Ovary (tissue), 10 donors: ENCODE measurements at regions of chr15 and their contacts with region 1.

Region 1: DNA sequence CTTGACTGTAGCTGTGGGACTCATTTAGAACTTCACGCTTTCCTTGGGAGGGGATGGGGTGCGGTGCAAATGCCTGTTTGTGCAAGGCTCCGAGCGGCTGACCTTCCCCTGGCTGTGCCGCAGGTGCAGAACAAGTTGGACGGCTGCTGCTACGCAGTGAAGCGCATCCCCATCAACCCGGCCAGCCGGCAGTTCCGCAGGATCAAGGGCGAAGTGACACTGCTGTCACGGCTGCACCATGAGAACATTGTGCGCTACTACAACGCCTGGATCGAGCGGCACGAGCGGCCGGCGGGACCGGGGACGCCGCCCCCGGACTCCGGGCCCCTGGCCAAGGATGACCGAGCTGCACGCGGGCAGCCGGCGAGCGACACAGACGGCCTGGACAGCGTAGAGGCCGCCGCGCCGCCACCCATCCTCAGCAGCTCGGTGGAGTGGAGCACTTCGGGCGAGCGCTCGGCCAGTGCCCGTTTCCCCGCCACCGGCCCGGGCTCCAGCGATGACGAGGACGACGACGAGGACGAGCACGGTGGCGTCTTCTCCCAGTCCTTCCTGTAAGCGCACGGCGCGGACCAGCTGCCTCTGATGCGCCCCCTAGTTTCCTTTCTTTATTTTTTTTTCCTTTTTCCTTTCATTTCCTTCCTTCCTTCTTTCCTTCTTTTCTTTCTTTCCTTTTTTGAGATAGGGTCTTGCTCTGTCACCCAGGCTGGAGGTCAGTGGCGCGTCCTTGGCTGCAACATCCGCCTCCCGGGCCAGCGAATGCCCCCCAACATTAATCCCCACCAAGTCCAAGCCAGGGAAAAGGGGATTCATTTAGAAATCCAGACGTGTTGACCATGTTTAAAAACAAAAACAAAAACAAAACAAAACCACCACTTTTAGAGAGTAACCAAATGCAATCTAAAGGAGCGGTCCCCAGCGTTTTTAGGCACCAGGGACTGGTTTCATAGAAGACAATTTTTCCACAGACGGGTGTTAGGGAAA is 42.7 kb downstream of the EIF2AK4 start:
- DNase-seq: peak; percentile 33 to 74 (median 68)
- H3K4me3 ChIP-seq: peak overlapping the region; percentile 46
- H3K27ac ChIP-seq: peak overlapping the region; percentile 78 to 84
- H3K4me1 ChIP-seq: peaks cover 4% of the 10 kb centered on the region
- H3K27me3 ChIP-seq: no peaks in the 10 kb centered on the region
- CTCF ChIP-seq: peak in 2 of 3 donors; percentile 39 to 57
- EP300 ChIP-seq: no peak
- POLR2A ChIP-seq: no peak

Region 2: GRCh38 chr15:39782441-39783138 is 194.0 kb before region 1 on chr15 and contains the start of gene FSIP1:
- intact Hi-C with region 1: loop called in 2 of 4 experiments (anchors 5 to 10 kb)
- DNase-seq: peak; percentile 95 to 98 (median 96)
- H3K4me3 ChIP-seq: peak within 1 kb of the TSS; percentile 77
- H3K27ac ChIP-seq: peak within 1 kb of the TSS in 1 of 2 donors; percentile 74
- H3K4me1 ChIP-seq: peaks cover 1% of the 10 kb centered on the region
- H3K27me3 ChIP-seq: no peaks in the 10 kb centered on the region
- CTCF ChIP-seq: no peak
- EP300 ChIP-seq: no peak
- POLR2A ChIP-seq: peak; percentile 51
- total RNA-seq, gene FSIP1: 0.38 to 6.8 (median 0.98) TPM